PC-9 (cell line): ENCODE measurements at regions of chr16 and their contacts with region 1.

Region 1: GRCh38 chr16:6704306-6704930 is 628.2 kb upstream of the RBFOX1 start:
- DNase-seq: no peak
- H3K4me3 ChIP-seq: no peak overlapping the region
- H3K27ac ChIP-seq: no peak overlapping the region
- H3K4me1 ChIP-seq: no peaks in the 10 kb centered on the region
- H3K27me3 ChIP-seq: 0 out of 2 replicates have a peak, but pooled peaks cover 5% of the 10 kb centered on the region
- CTCF ChIP-seq: no peak

Region 2: GRCh38 chr16:6573577-6573976 is 130.8 kb before region 1 on chr16:
- CTCF ChIA-PET with region 1: no interaction called
- POLR2A ChIA-PET with region 1: no interaction called
- intact Hi-C with region 1: no loop called
- DNase-seq: peak in 1 of 2 experiments; percentile 8
- H3K4me3 ChIP-seq: no peak overlapping the region
- H3K27ac ChIP-seq: no peak overlapping the region
- H3K4me1 ChIP-seq: no peaks in the 10 kb centered on the region
- H3K27me3 ChIP-seq: peaks cover 33% of the 10 kb centered on the region
- CTCF ChIP-seq: no peak

Region 3: GRCh38 chr16:6836771-6837170 is 132.4 kb after region 1 on chr16:
- CTCF ChIA-PET with region 1: no interaction called
- POLR2A ChIA-PET with region 1: interaction called, 11 read pairs
- intact Hi-C with region 1: no loop called
- DNase-seq: no peak
- H3K4me3 ChIP-seq: no peak overlapping the region
- H3K27ac ChIP-seq: no peak overlapping the region
- H3K4me1 ChIP-seq: no peaks in the 10 kb centered on the region
- H3K27me3 ChIP-seq: peaks cover 11% of the 10 kb centered on the region
- CTCF ChIP-seq: no peak

Region 4: GRCh38 chr16:8109510-8110369 is 1405.3 kb after region 1 on chr16:
- CTCF ChIA-PET with region 1: no interaction called
- POLR2A ChIA-PET with region 1: interaction called, 10 read pairs
- intact Hi-C with region 1: no loop called
- DNase-seq: peak in 1 of 2 experiments; percentile 20
- H3K4me3 ChIP-seq: no peak overlapping the region
- H3K27ac ChIP-seq: no peak overlapping the region
- H3K4me1 ChIP-seq: no peaks in the 10 kb centered on the region
- H3K27me3 ChIP-seq: no peaks in the 10 kb centered on the region
- CTCF ChIP-seq: no peak